Activated CD4-positive, alpha-beta memory T cell treated with anti-CD3 and anti-CD28 coated beads for 36 hours (primary cell): ENCODE measurements at regions of chr17 and their contacts with region 1.

Region 1: GRCh38 chr17:42964161-42964932 is at the start of gene AARSD1:
- DNase-seq: peak; percentile 96
- H3K4me3 Mint-ChIP-seq: peak within 1 kb of the TSS; percentile 97
- H3K27ac Mint-ChIP-seq: peak within 1 kb of the TSS; percentile 91
- H3K4me1 Mint-ChIP-seq: peaks cover 16% of the 10 kb centered on the region
- H3K27me3 Mint-ChIP-seq: no peaks in the 10 kb centered on the region
- total RNA-seq, gene AARSD1: 38.7 to 43.1 TPM

Region 2: GRCh38 chr17:42779936-42780850 is 184.2 kb before region 1 on chr17 and contains the start of gene WNK4:
- CTCF ChIA-PET with region 1: no interaction called
- POLR2A ChIA-PET with region 1: no interaction called
- intact Hi-C with region 1: no loop called
- DNase-seq: no peak
- H3K4me3 Mint-ChIP-seq: no peak within 1 kb of the TSS
- H3K27ac Mint-ChIP-seq: no peak within 1 kb of the TSS
- H3K4me1 Mint-ChIP-seq: peaks cover 23% of the 10 kb centered on the region
- H3K27me3 Mint-ChIP-seq: peaks cover 40% of the 10 kb centered on the region
- total RNA-seq, gene WNK4: 0.10 to 0.15 TPM

Region 3: GRCh38 chr17:42980398-42981397 is 16.4 kb after region 1 on chr17 and contains the start of gene RUNDC1:
- CTCF ChIA-PET with region 1: no interaction called
- POLR2A ChIA-PET with region 1: interaction called, 3 read pairs
- intact Hi-C with region 1: loop called (anchors 1 kb)
- DNase-seq: peak; percentile 94
- H3K4me3 Mint-ChIP-seq: peak within 1 kb of the TSS; percentile 99
- H3K27ac Mint-ChIP-seq: peak within 1 kb of the TSS; percentile 88
- H3K4me1 Mint-ChIP-seq: peaks cover 28% of the 10 kb centered on the region
- H3K27me3 Mint-ChIP-seq: no peaks in the 10 kb centered on the region
- total RNA-seq, gene RUNDC1: 10.0 to 11.5 TPM

Region 4: GRCh38 chr17:43118679-43119615 is 154.6 kb after region 1 on chr17:
- CTCF ChIA-PET with region 1: no interaction called
- POLR2A ChIA-PET with region 1: no interaction called
- intact Hi-C with region 1: no loop called
- DNase-seq: no peak
- H3K4me3 Mint-ChIP-seq: no peak overlapping the region
- H3K27ac Mint-ChIP-seq: no peak overlapping the region
- H3K4me1 Mint-ChIP-seq: peaks cover 7% of the 10 kb centered on the region
- H3K27me3 Mint-ChIP-seq: no peaks in the 10 kb centered on the region